Transverse colon (tissue), 4 donors: ENCODE measurements at regions of chr10 and their contacts with region 1.

Region 1: GRCh38 chr10:119650692-119651513 is at the start of gene BAG3:
- DNase-seq: peak; percentile 94
- H3K4me3 ChIP-seq: peak within 1 kb of the TSS; percentile 70 to 94 (median 87)
- H3K27ac ChIP-seq: peak within 1 kb of the TSS; percentile 93 to 98 (median 96)
- H3K4me1 ChIP-seq: peaks cover 15 to 34% (median 29%) of the 10 kb centered on the region in 4 donors
- H3K27me3 ChIP-seq: no peaks in the 10 kb centered on the region
- CTCF ChIP-seq: no peak
- EP300 ChIP-seq: no peak
- POLR2A ChIP-seq: peak; percentile 90
- total RNA-seq, gene BAG3: 22.5 to 85.7 (median 32.4) TPM

Region 2: DNA sequence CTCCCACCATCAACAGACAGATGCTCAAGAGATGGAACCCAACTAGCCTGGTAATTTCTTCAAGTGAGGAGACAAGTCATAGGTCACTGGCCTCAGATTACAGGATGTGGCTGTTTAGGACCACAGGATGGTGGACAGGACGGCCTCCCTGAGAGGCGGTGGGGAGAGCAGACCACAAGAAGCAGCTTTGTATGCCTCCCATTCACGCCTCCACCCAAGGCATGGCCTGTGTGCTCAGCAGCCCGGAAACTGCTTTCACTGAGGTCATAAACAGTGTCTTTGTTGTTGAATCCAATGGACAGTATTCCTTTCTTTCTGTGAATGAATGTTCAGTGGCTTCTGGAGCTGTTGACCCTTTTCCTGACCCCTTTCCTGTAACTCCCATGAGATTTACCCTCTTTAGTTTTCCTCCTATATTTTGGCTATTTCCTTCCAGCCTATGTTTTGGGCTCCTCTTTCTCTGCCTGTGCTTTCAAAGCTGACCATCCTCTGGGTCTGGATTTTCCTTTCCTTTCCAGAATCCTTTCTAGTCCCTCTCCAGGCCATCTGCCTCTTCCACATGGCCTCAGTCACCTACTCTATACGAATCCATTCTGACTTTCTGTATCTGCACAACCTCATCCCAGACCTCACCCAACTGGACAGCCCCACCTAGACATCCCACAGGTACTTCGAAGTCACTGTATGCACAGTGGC is 42.5 kb after region 1 on chr10:
- in situ Hi-C with region 1: no loop called
- intact Hi-C with region 1: no loop called
- DNase-seq: no peak
- H3K4me3 ChIP-seq: no peak overlapping the region
- H3K27ac ChIP-seq: no peak overlapping the region
- H3K4me1 ChIP-seq: no peaks in the 10 kb centered on the region
- H3K27me3 ChIP-seq: no peaks in the 10 kb centered on the region
- CTCF ChIP-seq: no peak
- EP300 ChIP-seq: no peak
- POLR2A ChIP-seq: no peak

Region 3: DNA sequence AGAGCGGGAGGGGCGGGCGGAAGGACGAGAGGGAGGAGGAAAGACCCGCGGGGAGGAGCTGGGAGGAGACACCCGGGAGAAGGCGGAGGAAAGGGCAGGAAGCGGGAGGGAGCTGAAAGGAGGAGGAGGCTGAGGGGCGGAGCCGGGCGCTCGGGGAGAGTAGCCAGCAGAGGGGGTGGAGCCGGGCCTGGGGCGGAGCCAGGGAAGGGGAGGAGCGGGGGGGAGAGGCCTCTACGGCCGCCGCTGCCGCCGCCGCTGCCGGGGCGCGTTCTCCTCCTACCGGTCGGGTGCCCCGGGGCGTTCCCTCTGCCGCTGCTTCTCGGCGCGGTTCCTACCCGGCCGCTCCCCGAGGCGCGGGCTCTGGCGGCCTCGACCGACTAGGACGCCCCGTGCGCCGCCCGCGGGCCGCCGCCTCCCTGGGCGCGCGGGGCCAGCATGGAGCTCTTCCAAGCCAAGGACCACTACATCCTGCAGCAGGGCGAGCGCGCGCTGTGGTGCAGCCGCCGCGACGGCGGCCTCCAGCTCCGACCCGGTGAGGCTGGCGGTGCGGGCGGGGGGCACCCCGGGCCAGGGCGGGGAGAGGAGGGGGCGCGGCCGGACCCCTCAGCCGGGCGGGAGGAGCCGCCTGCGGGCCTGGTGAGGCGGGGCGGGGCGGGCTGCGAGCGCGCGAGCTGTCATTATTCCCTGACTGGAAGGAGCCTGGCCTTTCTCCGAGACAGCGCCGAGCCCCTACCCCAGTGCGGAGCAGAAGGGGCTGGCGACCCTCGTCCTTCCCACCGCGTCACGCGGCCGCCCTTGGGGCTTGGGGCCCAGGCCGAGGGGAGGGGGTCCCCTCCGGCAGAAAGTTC is 75.1 kb after region 1 on chr10 and contains the start of gene INPP5F:
- in situ Hi-C with region 1: no loop called
- intact Hi-C with region 1: loop called (anchors 1 kb)
- DNase-seq: peak; percentile 100
- H3K4me3 ChIP-seq: peak within 1 kb of the TSS; percentile 63 to 96 (median 85)
- H3K27ac ChIP-seq: peak within 1 kb of the TSS; percentile 93 to 99 (median 97)
- H3K4me1 ChIP-seq: peaks cover 6 to 32% (median 22%) of the 10 kb centered on the region in 4 donors
- H3K27me3 ChIP-seq: no peaks in the 10 kb centered on the region
- CTCF ChIP-seq: peak in 2 of 5 experiments; percentile 21 to 28
- EP300 ChIP-seq: no peak
- POLR2A ChIP-seq: no peak
- total RNA-seq, gene INPP5F: 11.6 to 24.6 (median 16.6) TPM